Lower leg skin (tissue), 4 donors: ENCODE measurements at regions of chr7 and their contacts with region 1.

Region 1: GRCh38 chr7:107725151-107725740 is 18.7 kb upstream of the CBLL1 start:
- DNase-seq: peak in 1 of 2 donors; percentile 33
- H3K4me3 ChIP-seq: no peak overlapping the region
- CTCF ChIP-seq: no peak
- POLR2A ChIP-seq: no peak

Region 2: GRCh38 chr7:107394831-107395230 is 330.4 kb before region 1 on chr7:
- intact Hi-C with region 1: loop called (anchors 5 kb)
- DNase-seq: no peak
- H3K4me3 ChIP-seq: no peak overlapping the region
- CTCF ChIP-seq: no peak
- POLR2A ChIP-seq: no peak

Region 3: GRCh38 chr7:107462740-107463444 is 262.4 kb before region 1 on chr7:
- intact Hi-C with region 1: loop called (anchors 2 kb)
- DNase-seq: peak in 1 of 2 donors; percentile 47
- H3K4me3 ChIP-seq: no peak overlapping the region
- CTCF ChIP-seq: no peak
- POLR2A ChIP-seq: no peak

Region 4: GRCh38 chr7:107874605-107875446 is 149.6 kb after region 1 on chr7:
- intact Hi-C with region 1: no loop called
- DNase-seq: peak in 1 of 2 donors; percentile 51
- H3K4me3 ChIP-seq: no peak overlapping the region
- CTCF ChIP-seq: no peak
- POLR2A ChIP-seq: no peak

Region 5: DNA sequence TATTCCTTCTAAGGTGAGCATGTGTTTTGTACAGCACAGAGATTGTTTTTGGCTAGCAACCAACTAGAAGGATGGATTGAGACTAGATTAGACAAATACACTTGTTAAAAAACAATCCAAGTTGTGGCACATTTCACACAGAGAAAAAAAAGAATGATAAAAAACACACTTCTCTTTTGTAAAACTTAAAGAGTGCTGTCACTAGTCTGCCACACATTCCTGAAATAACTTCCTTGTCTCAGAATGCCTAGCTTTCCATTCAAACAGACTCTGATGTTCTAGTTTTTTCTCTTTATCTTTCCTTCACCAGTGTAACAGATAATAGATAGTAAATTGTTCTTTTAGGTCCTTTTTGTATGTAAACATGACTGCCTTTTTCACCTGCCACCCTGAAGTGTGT is 177.1 kb after region 1 on chr7:
- intact Hi-C with region 1: no loop called
- DNase-seq: no peak
- H3K4me3 ChIP-seq: no peak overlapping the region
- CTCF ChIP-seq: no peak
- POLR2A ChIP-seq: no peak